Activated CD4-positive, alpha-beta T cell treated with anti-CD3 and anti-CD28 coated beads for 36 hours (primary cell): ENCODE measurements at regions of chr21 and their contacts with region 1.

Region 1: DNA sequence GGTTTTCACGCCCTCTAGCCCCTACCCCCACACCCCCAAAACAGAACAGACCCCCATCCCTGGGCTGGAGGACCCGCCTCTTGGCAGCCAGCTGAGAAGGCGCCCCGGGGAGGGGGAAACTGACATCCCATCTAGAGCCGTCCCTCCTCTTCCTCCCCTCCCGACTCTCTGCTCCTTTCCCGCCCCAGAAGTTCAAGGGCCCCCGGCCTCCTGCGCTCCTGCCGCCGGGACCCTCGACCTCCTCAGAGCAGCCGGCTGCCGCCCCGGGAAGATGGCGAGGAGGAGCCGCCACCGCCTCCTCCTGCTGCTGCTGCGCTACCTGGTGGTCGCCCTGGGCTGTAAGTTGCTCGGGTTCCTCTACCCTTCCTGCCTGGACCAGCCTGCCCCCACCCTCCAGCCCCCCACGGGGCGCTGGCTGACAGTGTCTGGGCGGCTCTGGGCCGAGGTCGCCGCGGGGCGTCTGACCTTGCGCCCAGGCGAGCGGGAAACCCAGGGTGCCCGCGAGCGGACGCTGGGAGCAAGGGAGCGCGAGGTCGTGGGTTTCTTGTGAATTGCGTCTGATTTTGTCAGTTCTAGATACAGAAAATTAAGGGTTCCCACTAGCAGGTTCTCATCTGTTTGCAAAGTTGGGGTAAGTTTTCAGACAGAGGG is 618 bp downstream of the JAM2 start:
- DNase-seq: peak; percentile 63
- ATAC-seq: peak; percentile 76
- H3K4me3 Mint-ChIP-seq: peak overlapping the region; percentile 62
- H3K27ac Mint-ChIP-seq: no peak overlapping the region
- H3K4me1 Mint-ChIP-seq: peaks cover 28% of the 10 kb centered on the region
- H3K27me3 Mint-ChIP-seq: peaks cover 47% of the 10 kb centered on the region

Region 2: GRCh38 chr21:25734904-25735645 is 95.4 kb after region 1 on chr21 and contains the starts of genes ATP5PF and GABPA:
- CTCF ChIA-PET with region 1: interaction called, 3 read pairs
- POLR2A ChIA-PET with region 1: no interaction called
- intact Hi-C with region 1: loop called (anchors 1 to 2 kb)
- DNase-seq: peak; percentile 99
- ATAC-seq: peak; percentile 94
- H3K4me3 Mint-ChIP-seq: peak within 1 kb of the TSS; percentile 98
- H3K27ac Mint-ChIP-seq: peak within 1 kb of the TSS; percentile 100
- H3K4me1 Mint-ChIP-seq: peaks cover 48% of the 10 kb centered on the region
- H3K27me3 Mint-ChIP-seq: no peaks in the 10 kb centered on the region
- total RNA-seq, gene ATP5PF: 154 to 165 TPM
- total RNA-seq, gene GABPA: 18.7 to 25.3 TPM